Activated B cell treated with CpG ODN at 0.5 μM for 24 hours (primary cell): ENCODE measurements at regions of chr5 and their contacts with region 1.

Region 1: DNA sequence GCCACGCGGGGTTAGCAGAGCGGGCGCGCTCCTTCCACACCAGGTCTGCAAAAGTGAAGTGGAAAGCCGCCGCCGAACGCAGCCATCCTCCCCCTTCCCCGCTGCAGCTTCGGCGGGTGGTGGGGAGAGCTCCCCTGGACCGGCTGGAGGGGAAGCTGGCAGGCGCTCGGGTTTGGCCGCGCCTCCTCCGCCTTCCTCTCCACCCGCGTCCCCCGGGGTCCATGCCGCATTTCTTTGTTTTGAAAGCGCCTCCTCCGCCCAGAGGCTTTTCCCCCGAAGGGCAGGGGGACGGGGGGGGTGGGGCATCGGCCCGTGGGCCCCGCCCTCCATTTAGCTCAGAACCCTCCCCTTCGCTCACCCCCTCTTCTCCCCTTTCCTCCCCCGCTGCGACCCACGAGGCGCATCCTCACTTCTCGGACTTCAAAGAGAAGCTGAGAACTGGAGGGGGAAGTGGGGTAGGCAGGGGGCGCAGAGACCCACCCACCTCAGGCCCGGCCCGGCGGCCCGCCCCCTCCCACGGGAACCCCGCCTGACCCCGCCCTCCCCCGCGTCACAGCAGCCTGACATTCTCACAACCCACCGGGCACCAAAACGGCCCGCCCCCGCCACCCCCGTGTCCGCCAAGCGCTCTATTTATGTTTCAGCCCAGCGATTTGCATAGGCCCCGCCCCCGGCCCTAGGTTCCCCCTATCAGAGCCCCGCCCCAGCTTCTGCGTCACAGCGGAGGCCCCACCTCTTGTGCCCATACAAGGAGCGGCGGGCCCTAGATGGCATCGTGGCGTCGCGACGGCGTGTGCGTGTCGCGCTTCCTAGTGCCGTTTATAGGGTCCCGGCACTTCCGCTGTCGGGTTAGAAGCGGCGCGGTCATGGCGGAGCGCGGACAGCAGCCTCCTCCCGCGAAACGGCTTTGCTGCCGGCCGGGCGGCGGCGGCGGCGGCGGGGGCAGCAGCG is at the start of gene ZSWIM6:
- DNase-seq: peak; percentile 97
- ATAC-seq: peak; percentile 78
- H3K4me3 Mint-ChIP-seq: peak within 1 kb of the TSS; percentile 93
- H3K27ac Mint-ChIP-seq: peak within 1 kb of the TSS; percentile 93
- H3K4me1 Mint-ChIP-seq: peaks cover 48% of the 10 kb centered on the region
- H3K27me3 Mint-ChIP-seq: peaks cover 5% of the 10 kb centered on the region
- CTCF ChIP-seq: no peak
- total RNA-seq, gene ZSWIM6: 6.9 and 8.5 TPM in 2 replicates

Region 2: GRCh38 chr5:60699530-60700382 is 631.9 kb before region 1 on chr5 and contains the start of gene DEPDC1B:
- CTCF ChIA-PET with region 1: no interaction called
- POLR2A ChIA-PET with region 1: interaction called, 3 read pairs
- intact Hi-C with region 1: loop called (anchors 1 kb)
- DNase-seq: peak; percentile 79
- ATAC-seq: peak; percentile 89
- H3K4me3 Mint-ChIP-seq: peak within 1 kb of the TSS; percentile 90
- H3K27ac Mint-ChIP-seq: peak within 1 kb of the TSS; percentile 42
- H3K4me1 Mint-ChIP-seq: peaks cover 12% of the 10 kb centered on the region
- H3K27me3 Mint-ChIP-seq: no peaks in the 10 kb centered on the region
- CTCF ChIP-seq: no peak
- total RNA-seq, gene DEPDC1B: 0.44 and 0.98 TPM in 2 replicates

Region 3: DNA sequence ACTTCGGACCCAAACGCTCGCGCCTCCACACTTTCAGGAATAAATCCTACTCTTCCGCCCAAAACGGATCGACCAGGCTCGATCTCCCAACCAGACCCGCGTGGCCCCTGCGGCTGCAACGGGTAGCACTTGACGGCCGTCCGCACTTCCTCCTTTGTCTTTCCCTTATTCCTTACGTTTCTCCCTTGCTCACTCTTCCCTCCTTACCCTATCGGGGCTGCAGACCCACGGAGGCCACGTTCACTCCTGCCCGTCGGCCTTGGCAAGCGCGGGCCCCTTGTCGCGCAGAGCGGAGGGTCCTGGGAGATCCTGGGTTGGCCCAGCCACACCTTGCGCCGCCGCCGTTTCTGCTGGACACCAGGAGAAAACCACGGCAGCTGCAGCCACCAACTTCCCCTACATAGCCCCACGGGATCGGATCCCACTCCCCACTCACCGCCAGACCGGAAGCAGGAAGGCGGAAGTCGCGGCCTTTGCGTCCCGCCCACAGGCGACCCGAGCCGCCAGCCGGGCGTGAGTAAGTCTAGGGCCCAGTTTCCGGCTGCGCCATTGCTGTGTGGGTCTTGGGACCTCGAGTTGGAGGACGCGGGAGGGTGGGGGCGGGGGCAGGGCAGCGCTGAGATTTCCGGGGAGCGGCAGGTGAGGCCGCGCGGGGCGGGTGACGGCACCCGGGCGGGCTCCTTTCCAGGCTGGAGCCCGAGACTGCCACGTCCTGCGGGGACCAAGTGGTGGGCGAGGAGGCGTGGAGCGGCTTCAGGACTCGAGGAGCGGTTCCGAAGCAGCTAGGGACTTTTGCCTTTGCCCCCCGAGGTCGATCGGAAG is 169.5 kb before region 1 on chr5 and contains the start of gene SMIM15:
- CTCF ChIA-PET with region 1: no interaction called
- POLR2A ChIA-PET with region 1: interaction called, 20 read pairs
- intact Hi-C with region 1: loop called (anchors 1 kb)
- DNase-seq: peak; percentile 76
- ATAC-seq: peak; percentile 92
- H3K4me3 Mint-ChIP-seq: peak within 1 kb of the TSS; percentile 95
- H3K27ac Mint-ChIP-seq: peak within 1 kb of the TSS; percentile 95
- H3K4me1 Mint-ChIP-seq: peaks cover 30% of the 10 kb centered on the region
- H3K27me3 Mint-ChIP-seq: no peaks in the 10 kb centered on the region
- CTCF ChIP-seq: no peak
- total RNA-seq, gene SMIM15: 35.7 and 36.4 TPM in 2 replicates

Region 4: GRCh38 chr5:61319388-61320146 is 12.1 kb before region 1 on chr5:
- CTCF ChIA-PET with region 1: no interaction called
- POLR2A ChIA-PET with region 1: interaction called, 33 read pairs
- intact Hi-C with region 1: loop called (anchors 1 kb)
- DNase-seq: no peak
- ATAC-seq: peak; percentile 85
- H3K4me3 Mint-ChIP-seq: peak overlapping the region; percentile 66
- H3K27ac Mint-ChIP-seq: peak overlapping the region; percentile 39
- H3K4me1 Mint-ChIP-seq: peaks cover 25% of the 10 kb centered on the region
- H3K27me3 Mint-ChIP-seq: peaks cover 6% of the 10 kb centered on the region
- CTCF ChIP-seq: no peak

Region 5: GRCh38 chr5:61525512-61526206 is 194.0 kb after region 1 on chr5:
- CTCF ChIA-PET with region 1: no interaction called
- POLR2A ChIA-PET with region 1: no interaction called
- intact Hi-C with region 1: loop called (anchors 5 kb)
- DNase-seq: no peak
- ATAC-seq: no peak
- H3K4me3 Mint-ChIP-seq: no peak overlapping the region
- H3K27ac Mint-ChIP-seq: no peak overlapping the region
- H3K4me1 Mint-ChIP-seq: peaks cover 13% of the 10 kb centered on the region
- H3K27me3 Mint-ChIP-seq: no peaks in the 10 kb centered on the region
- CTCF ChIP-seq: no peak

Region 6: GRCh38 chr5:61538722-61539501 is 207.2 kb after region 1 on chr5:
- CTCF ChIA-PET with region 1: no interaction called
- POLR2A ChIA-PET with region 1: no interaction called
- intact Hi-C with region 1: no loop called
- DNase-seq: no peak
- ATAC-seq: no peak
- H3K4me3 Mint-ChIP-seq: no peak overlapping the region
- H3K27ac Mint-ChIP-seq: no peak overlapping the region
- H3K4me1 Mint-ChIP-seq: peaks cover 5% of the 10 kb centered on the region
- H3K27me3 Mint-ChIP-seq: no peaks in the 10 kb centered on the region
- CTCF ChIP-seq: no peak

Region 7: DNA sequence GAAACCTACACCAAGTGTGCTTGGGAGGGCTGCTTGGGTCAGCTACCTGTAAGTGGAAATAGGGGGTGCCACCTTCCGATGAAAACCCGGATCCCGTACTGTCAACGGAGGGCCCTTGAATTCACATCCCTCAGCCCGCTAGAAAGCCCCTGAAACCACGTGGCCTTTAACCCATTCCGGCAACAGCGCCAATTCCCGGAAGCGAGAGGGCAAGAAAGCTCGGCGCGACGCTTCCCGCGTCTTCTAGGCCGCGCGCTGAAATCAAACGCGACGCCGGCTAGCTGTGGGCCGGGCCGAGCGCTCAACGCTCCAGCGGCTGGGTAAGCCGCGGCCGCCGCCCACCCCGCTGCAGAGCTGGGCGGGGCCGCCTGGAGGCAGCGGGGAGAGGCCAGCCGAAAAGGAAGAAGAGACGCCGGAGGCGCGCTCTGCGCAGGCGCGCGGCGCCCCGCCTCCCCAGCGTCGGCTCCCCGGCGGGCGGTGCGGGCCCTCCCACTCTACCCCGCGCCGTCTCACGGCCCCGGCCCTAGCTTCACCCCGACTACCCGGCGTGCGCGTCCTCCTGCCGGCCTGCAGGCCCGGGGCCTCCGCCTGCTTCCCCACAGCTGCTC is 974.1 kb after region 1 on chr5 and contains the start of gene KIF2A:
- CTCF ChIA-PET with region 1: no interaction called
- POLR2A ChIA-PET with region 1: interaction called, 5 read pairs
- intact Hi-C with region 1: loop called (anchors 1 kb)
- DNase-seq: peak; percentile 93
- ATAC-seq: peak; percentile 91
- H3K4me3 Mint-ChIP-seq: peak within 1 kb of the TSS; percentile 98
- H3K27ac Mint-ChIP-seq: peak within 1 kb of the TSS; percentile 98
- H3K4me1 Mint-ChIP-seq: peaks cover 46% of the 10 kb centered on the region
- H3K27me3 Mint-ChIP-seq: no peaks in the 10 kb centered on the region
- CTCF ChIP-seq: no peak
- total RNA-seq, gene KIF2A: 42.6 and 45.9 TPM in 2 replicates

Region 8: DNA sequence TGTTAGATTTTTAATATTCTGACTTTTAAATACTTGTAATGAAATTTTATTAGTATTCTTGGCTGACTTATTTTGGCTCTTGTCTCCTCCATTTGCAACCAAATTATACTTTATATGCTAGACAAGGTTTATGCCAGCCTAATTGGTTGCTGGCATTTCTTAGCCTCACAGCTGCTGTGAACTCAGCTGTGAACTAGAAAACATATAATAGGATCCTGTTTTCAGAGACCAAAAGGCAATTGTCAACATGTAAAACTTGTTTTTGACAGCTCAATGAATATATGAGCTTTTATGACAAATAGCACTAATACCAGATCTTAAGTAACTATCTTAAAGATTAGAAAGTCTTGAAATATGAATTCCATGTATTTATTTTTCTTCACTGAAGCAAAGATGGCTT is 1000.2 kb after region 1 on chr5:
- CTCF ChIA-PET with region 1: no interaction called
- POLR2A ChIA-PET with region 1: no interaction called
- intact Hi-C with region 1: no loop called
- DNase-seq: no peak
- ATAC-seq: no peak
- H3K4me3 Mint-ChIP-seq: no peak overlapping the region
- H3K27ac Mint-ChIP-seq: no peak overlapping the region
- H3K4me1 Mint-ChIP-seq: peaks cover 55% of the 10 kb centered on the region
- H3K27me3 Mint-ChIP-seq: no peaks in the 10 kb centered on the region
- CTCF ChIP-seq: no peak